ENCODE measurements at regions of chr5 and their contacts with region 1.

Region 1: DNA sequence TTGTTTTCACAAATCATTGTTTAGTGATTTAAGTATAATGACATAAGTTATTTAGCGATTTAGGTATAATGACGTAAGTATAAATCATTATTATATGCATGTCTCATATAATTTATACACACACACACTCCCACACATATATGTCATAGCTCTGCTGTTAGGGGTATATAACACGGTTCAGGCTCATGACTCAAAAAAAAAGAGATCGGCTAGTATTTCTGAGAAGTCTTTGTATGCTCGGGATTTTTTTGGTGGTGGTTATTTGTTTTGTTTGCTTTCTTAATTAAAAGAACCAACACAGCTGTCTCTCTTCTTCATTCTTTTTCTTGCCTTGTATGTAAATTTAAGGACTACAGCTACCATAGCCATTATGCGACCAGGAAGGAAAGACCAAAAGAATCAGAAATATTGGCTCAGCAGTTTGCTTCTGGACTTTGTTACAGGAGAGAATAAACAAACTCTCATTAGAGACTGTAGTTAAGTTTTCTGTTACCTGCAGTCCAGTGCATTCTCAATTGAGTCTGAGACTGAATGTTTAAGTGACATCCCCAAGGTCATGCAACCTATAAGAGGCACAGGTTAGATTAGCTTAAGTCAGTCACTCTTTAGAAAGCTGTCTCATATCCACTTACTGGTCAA is 83.2 kb upstream of the NREP start:
- DNase-seq: no peak
- H3K4me3 ChIP-seq: no peak overlapping the region
- H3K27ac ChIP-seq: no peak overlapping the region
- H3K4me1 ChIP-seq: no peaks in the 10 kb centered on the region
- H3K27me3 ChIP-seq: peaks cover 76% of the 10 kb centered on the region
- CTCF ChIP-seq: no peak

Region 2: GRCh38 chr5:111550279-111551020 is 289.7 kb before region 1 on chr5:
- CTCF ChIA-PET with region 1: no interaction called
- POLR2A ChIA-PET with region 1: no interaction called
- intact Hi-C with region 1: loop called (anchors 5 kb)
- DNase-seq: peak; percentile 89
- H3K4me3 ChIP-seq: no peak overlapping the region
- H3K27ac ChIP-seq: no peak overlapping the region
- H3K4me1 ChIP-seq: peaks cover 5% of the 10 kb centered on the region
- H3K27me3 ChIP-seq: no peaks in the 10 kb centered on the region
- CTCF ChIP-seq: peak; percentile 73